Right ventricle myocardium inferior (tissue), 1 donor: ENCODE measurements at regions of chr2 and their contacts with region 1.

Region 1: GRCh38 chr2:86035883-86036668 is 69.6 kb downstream of the POLR1A start:
- DNase-seq: peak; percentile 92
- ATAC-seq: peak; percentile 86

Region 2: DNA sequence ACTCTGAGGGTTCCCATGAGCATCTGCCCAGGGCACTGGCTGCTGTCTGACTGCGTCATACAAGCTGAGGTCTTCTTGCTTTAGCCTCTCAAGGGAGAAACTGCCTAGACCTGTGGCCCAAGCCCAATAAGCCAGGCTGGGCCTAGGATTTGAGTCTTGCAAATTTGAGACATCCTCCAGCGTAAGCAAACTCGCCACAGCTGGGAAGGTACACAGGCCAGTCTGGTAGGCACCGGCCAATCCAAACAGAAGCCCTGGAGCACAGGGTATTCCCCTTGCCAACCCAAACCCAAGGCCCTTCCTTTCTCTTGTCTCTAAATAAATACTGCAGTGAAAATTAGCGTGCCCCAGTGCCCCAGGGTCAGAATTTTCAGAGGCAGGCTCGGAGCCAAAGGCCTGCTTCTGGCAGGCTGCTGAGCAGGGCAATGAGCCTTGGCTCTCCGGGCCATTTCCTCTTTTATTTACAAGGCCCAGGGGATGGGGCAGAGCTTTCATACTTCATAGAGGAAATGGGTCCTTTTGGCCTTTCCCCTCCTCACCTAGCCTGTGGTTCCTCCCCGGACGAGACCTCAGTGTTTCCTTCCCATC is 36.3 kb after region 1 on chr2:
- intact Hi-C with region 1: loop called (anchors 5 kb)
- DNase-seq: peak; percentile 83
- ATAC-seq: peak; percentile 88

Region 3: GRCh38 chr2:86135653-86136052 is 99.6 kb after region 1 on chr2:
- intact Hi-C with region 1: no loop called
- DNase-seq: no peak
- ATAC-seq: no peak